ENCODE measurements at regions of chr1 and their contacts with region 1.

Region 1: GRCh38 chr1:173418107-173418985 is 58.8 kb upstream of the PRDX6 start:
- DNase-seq: peak in 1 of 2 donors; percentile 27
- ATAC-seq: no peak

Region 2: GRCh38 chr1:173302890-173303829 is 115.2 kb before region 1 on chr1:
- intact Hi-C with region 1: no loop called
- DNase-seq: no peak
- ATAC-seq: no peak

Region 3: GRCh38 chr1:173824331-173825081 is 406.2 kb after region 1 on chr1 and contains the starts of genes CENPL and DARS2:
- intact Hi-C with region 1: loop called in 1 of 2 experiments (anchors 5 kb)
- DNase-seq: peak; percentile 96 to 97
- ATAC-seq: peak; percentile 95
- total RNA-seq, gene CENPL: 3.2 to 6.8 TPM
- total RNA-seq, gene DARS2: 24.3 to 27.4 TPM

Measured in left colon (tissue), 2 donors.